Naive thymus-derived CD4-positive, alpha-beta T cell (primary cell): ENCODE measurements at regions of chr1 and their contacts with region 1.

Region 1: DNA sequence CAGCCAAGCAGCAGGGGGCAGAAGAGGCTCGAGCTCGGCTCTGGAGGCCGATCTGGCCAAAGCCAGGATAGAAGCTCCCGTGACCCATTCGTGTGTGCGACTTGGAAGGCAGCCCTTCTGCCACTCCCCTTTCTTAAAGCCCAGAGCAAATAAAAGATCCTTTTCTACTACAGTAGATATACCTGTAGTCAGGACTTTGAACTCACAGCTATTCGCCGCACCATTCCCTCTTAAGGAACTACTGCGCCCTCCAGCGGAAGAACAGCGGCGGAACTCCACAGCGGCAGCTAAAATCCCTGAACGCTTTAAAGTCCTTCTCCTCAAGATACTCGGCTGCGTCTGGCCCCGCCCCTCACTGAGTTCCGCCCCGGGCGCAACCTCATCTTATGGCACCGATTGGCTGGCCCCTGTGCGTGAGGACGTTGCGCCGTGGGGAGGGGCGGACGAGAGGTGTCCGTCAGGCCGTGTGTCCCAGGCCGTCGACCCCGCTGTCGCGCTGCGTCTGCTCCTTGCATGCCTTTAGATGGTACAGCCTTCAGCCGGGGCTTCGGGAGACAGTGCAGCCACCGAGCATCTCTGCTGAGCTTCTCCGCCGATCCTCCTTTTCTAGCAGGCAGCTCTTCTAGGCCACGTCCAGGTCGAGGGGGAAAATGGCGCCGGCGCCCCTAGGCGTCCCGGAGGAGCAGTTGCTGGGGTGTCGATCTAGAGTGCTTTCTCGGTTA is at the start of gene LRIG2:
- DNase-seq: peak; percentile 90 to 97 (median 96)
- ATAC-seq: peak; percentile 98
- H3K4me3 ChIP-seq: peak within 1 kb of the TSS; percentile 83
- H3K4me3 Mint-ChIP-seq: peak within 1 kb of the TSS; percentile 95 to 100 (median 98)
- H3K27ac ChIP-seq: peak within 1 kb of the TSS; percentile 82
- H3K27ac Mint-ChIP-seq: peak within 1 kb of the TSS; percentile 91 to 98 (median 93)
- H3K4me1 ChIP-seq: peaks cover 10 to 18% of the 10 kb centered on the region in 2 donors
- H3K4me1 Mint-ChIP-seq: peaks cover 18 to 42% (median 29%) of the 10 kb centered on the region in 7 donors
- H3K27me3 ChIP-seq: no peaks in the 10 kb centered on the region
- H3K27me3 Mint-ChIP-seq: no peaks in the 10 kb centered on the region
- total RNA-seq, gene LRIG2: 15.5 to 27.0 (median 20.2) TPM

Region 2: DNA sequence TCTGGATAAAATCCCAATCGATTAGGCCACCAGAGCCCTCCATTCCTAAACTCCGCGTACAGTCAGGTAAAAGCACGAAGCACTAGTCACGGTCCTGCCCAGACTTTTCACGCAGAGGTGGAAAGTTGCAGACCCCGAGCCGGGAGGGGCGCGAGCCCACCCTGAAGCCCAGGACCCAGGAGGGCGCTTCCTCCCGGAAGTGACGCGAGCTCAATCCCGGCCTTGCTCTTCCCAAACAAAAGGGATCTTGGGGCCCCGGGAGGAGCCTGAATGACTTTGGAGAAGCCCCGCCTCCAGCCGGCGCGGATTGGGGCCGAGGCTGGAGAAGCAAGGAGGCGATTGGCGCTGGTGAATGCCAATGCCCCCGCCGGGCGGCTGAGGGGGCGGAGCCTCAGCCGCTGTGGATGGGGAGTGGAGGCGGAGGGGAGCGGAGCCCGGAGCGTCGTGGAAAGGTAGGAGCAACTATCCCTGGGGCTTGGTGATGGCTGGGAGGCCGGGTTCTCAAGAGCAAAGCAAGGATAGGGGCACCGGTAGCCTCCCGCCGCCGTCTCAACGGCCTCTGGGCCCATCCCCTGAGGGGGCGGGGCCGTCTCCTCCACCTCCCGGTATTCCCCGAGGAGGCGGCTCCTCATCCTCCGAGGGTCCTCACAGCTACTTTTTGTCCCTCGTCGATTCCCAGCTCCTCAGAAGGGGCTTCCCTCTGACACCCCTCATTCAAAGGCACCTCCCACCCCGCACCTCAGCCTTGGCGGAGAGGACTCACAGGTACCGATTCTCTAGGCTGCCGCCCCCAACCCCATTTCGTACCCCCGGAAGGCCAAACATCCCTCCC is 676.9 kb before region 1 on chr1 and contains the start of gene CTTNBP2NL:
- CTCF ChIA-PET with region 1: interaction called, 5 read pairs
- POLR2A ChIA-PET with region 1: no interaction called
- intact Hi-C with region 1: loop called (anchors 2 to 10 kb)
- DNase-seq: peak; percentile 40 to 83 (median 67)
- ATAC-seq: peak; percentile 95
- H3K4me3 ChIP-seq: peak within 1 kb of the TSS; percentile 91
- H3K4me3 Mint-ChIP-seq: peak within 1 kb of the TSS; percentile 80 to 95 (median 92)
- H3K27ac ChIP-seq: peak within 1 kb of the TSS; percentile 32
- H3K27ac Mint-ChIP-seq: peak within 1 kb of the TSS in 8 of 9 donors; percentile 6 to 88 (median 60)
- H3K4me1 ChIP-seq: peaks cover 7 to 14% of the 10 kb centered on the region in 2 donors
- H3K4me1 Mint-ChIP-seq: peaks cover 13 to 37% (median 20%) of the 10 kb centered on the region in 7 donors
- H3K27me3 ChIP-seq: peaks cover 0 to 3% of the 10 kb centered on the region in 2 donors
- H3K27me3 Mint-ChIP-seq: peaks cover 13 to 26% (median 18%) of the 10 kb centered on the region in 5 donors
- total RNA-seq, gene CTTNBP2NL: 0.32 to 1.8 (median 0.90) TPM

Region 3: DNA sequence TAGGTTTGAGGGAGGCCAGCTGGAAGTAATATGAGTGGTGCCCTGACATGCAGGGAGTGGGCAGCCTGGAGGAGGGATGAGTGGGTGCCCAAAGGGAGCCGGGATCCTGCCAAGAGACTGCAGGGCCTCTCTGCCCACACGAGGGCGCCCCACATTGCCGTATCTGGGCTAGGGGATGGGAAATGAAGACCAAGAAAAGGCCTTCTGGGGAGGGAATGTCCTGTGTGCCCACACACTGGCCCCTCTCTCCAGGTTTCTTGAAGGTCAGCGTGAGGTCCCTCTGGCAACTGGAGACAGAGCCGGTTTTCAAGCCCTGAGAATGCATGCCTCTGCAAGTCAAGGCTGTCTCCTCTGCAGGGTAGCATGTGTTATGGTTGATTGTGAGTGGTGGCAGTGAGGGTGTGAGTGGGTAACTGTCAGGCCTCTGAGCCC is 263.6 kb before region 1 on chr1:
- CTCF ChIA-PET with region 1: interaction called, 3 read pairs
- POLR2A ChIA-PET with region 1: no interaction called
- intact Hi-C with region 1: loop called (anchors 2 kb)
- DNase-seq: peak; percentile 19 to 71 (median 38)
- ATAC-seq: peak; percentile 87
- H3K4me3 ChIP-seq: no peak overlapping the region
- H3K4me3 Mint-ChIP-seq: no peak overlapping the region
- H3K27ac ChIP-seq: no peak overlapping the region
- H3K27ac Mint-ChIP-seq: no peak overlapping the region
- H3K4me1 ChIP-seq: no peaks in the 10 kb centered on the region
- H3K4me1 Mint-ChIP-seq: no peaks in the 10 kb centered on the region
- H3K27me3 ChIP-seq: no peaks in the 10 kb centered on the region
- H3K27me3 Mint-ChIP-seq: peaks cover 0 to 26% (median 0%) of the 10 kb centered on the region in 5 donors

Region 4: DNA sequence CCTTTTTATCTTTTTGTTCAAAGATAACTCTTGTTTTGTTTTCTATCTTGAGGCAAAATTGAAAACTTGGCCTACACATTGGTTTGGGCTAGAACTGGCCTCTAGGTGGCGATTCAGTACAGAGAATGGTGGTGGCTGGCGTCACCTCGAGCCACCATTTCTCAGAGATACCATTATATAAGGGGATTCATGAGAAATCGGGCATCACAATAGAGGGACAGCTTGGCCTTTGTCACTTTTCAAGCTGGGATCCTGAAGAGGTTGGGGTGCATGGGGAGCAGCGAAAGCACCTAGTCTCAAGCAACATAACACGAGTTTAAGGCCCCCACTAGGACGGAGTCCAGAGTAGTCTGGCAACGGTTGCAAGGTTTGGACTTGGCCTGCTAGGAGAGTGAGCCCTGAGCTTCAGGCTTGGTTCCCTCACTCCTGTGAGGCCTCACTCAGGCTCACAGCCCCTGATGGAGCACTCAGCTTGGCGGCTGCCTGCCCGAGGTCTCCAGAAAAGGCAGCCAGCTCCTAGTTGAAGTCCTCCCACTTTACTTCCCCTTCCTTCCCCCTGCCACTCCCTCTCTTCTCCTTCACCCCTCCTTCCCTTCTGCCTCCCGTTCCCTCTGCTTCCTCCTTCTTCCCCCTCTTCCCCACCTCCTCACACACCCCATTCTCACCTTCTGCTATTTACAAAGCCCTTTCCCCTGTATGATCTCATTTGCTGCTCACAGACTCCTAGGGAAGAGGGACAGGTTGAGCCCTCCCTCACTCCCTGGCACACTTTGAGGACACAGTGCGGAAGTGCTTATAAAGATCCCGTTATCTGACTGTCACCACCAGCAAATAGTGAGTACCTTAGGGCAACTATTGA is 67.9 kb after region 1 on chr1:
- CTCF ChIA-PET with region 1: no interaction called
- POLR2A ChIA-PET with region 1: no interaction called
- intact Hi-C with region 1: loop called in 1 of 2 experiments (anchors 2 kb)
- DNase-seq: peak in 8 of 9 donors; percentile 8 to 62 (median 47)
- ATAC-seq: peak; percentile 87
- H3K4me3 ChIP-seq: no peak overlapping the region
- H3K4me3 Mint-ChIP-seq: peak overlapping the region in 2 of 10 donors; percentile 21 to 59
- H3K27ac ChIP-seq: no peak overlapping the region
- H3K27ac Mint-ChIP-seq: peak overlapping the region in 4 of 9 donors; percentile 21 to 49 (median 46)
- H3K4me1 ChIP-seq: peaks cover 0 to 8% of the 10 kb centered on the region in 2 donors
- H3K4me1 Mint-ChIP-seq: peaks cover 8 to 25% (median 19%) of the 10 kb centered on the region in 7 donors
- H3K27me3 ChIP-seq: no peaks in the 10 kb centered on the region
- H3K27me3 Mint-ChIP-seq: no peaks in the 10 kb centered on the region

Region 5: GRCh38 chr1:113811888-113812660 is 739.2 kb after region 1 on chr1 and contains the start of gene RSBN1:
- CTCF ChIA-PET with region 1: no interaction called
- POLR2A ChIA-PET with region 1: no interaction called
- intact Hi-C with region 1: loop called in 1 of 2 experiments (anchors 2 kb)
- DNase-seq: peak; percentile 92 to 99 (median 98)
- ATAC-seq: peak; percentile 95
- H3K4me3 ChIP-seq: peak within 1 kb of the TSS; percentile 88
- H3K4me3 Mint-ChIP-seq: peak within 1 kb of the TSS; percentile 91 to 99 (median 97)
- H3K27ac ChIP-seq: peak within 1 kb of the TSS; percentile 97
- H3K27ac Mint-ChIP-seq: peak within 1 kb of the TSS; percentile 96 to 99 (median 98)
- H3K4me1 ChIP-seq: peaks cover 17 to 25% of the 10 kb centered on the region in 2 donors
- H3K4me1 Mint-ChIP-seq: peaks cover 20 to 51% (median 38%) of the 10 kb centered on the region in 7 donors
- H3K27me3 ChIP-seq: no peaks in the 10 kb centered on the region
- H3K27me3 Mint-ChIP-seq: no peaks in the 10 kb centered on the region
- total RNA-seq, gene RSBN1: 29.9 to 58.1 (median 42.0) TPM

Region 6: GRCh38 chr1:114511032-114511785 is 1438.3 kb after region 1 on chr1 and contains the start of gene TRIM33:
- CTCF ChIA-PET with region 1: no interaction called
- POLR2A ChIA-PET with region 1: no interaction called
- intact Hi-C with region 1: loop called in 1 of 2 experiments (anchors 2 kb)
- DNase-seq: peak; percentile 91 to 95 (median 93)
- ATAC-seq: peak; percentile 89
- H3K4me3 ChIP-seq: peak within 1 kb of the TSS; percentile 71
- H3K4me3 Mint-ChIP-seq: peak within 1 kb of the TSS; percentile 86 to 99 (median 97)
- H3K27ac ChIP-seq: peak within 1 kb of the TSS; percentile 100
- H3K27ac Mint-ChIP-seq: peak within 1 kb of the TSS; percentile 98 to 100 (median 99)
- H3K4me1 ChIP-seq: peaks cover 22 to 29% of the 10 kb centered on the region in 2 donors
- H3K4me1 Mint-ChIP-seq: peaks cover 41 to 63% (median 52%) of the 10 kb centered on the region in 7 donors
- H3K27me3 ChIP-seq: no peaks in the 10 kb centered on the region
- H3K27me3 Mint-ChIP-seq: peaks cover 0 to 7% (median 0%) of the 10 kb centered on the region in 5 donors
- total RNA-seq, gene TRIM33: 43.8 to 57.6 (median 51.1) TPM

Region 7: GRCh38 chr1:114780344-114781226 is 1707.7 kb after region 1 on chr1 and contains the start of gene SIKE1:
- CTCF ChIA-PET with region 1: no interaction called
- POLR2A ChIA-PET with region 1: no interaction called
- intact Hi-C with region 1: loop called in 1 of 2 experiments (anchors 2 kb)
- DNase-seq: peak; percentile 82 to 98 (median 95)
- ATAC-seq: peak; percentile 99
- H3K4me3 ChIP-seq: peak within 1 kb of the TSS; percentile 78
- H3K4me3 Mint-ChIP-seq: peak within 1 kb of the TSS; percentile 98 to 100 (median 100)
- H3K27ac ChIP-seq: peak within 1 kb of the TSS; percentile 87
- H3K27ac Mint-ChIP-seq: peak within 1 kb of the TSS; percentile 96 to 100 (median 99)
- H3K4me1 ChIP-seq: peaks cover 0 to 8% of the 10 kb centered on the region in 2 donors
- H3K4me1 Mint-ChIP-seq: peaks cover 19 to 40% (median 30%) of the 10 kb centered on the region in 7 donors
- H3K27me3 ChIP-seq: no peaks in the 10 kb centered on the region
- H3K27me3 Mint-ChIP-seq: peaks cover 0 to 17% (median 0%) of the 10 kb centered on the region in 5 donors
- total RNA-seq, gene SIKE1: 43.4 to 69.4 (median 61.2) TPM